ENCODE measurements at regions of chr5 and their contacts with region 1.

Region 1: GRCh38 chr5:74927336-74927735 is 61.1 kb upstream of the FAM169A start:
- DNase-seq: peak; percentile 72
- H3K4me3 ChIP-seq: no peak overlapping the region
- H3K27ac ChIP-seq: no peak overlapping the region
- H3K4me1 ChIP-seq: no peaks in the 10 kb centered on the region
- H3K27me3 ChIP-seq: no peaks in the 10 kb centered on the region
- CTCF ChIP-seq: no peak
- EP300 ChIP-seq: no peak
- POLR2A ChIP-seq: no peak

Region 2: DNA sequence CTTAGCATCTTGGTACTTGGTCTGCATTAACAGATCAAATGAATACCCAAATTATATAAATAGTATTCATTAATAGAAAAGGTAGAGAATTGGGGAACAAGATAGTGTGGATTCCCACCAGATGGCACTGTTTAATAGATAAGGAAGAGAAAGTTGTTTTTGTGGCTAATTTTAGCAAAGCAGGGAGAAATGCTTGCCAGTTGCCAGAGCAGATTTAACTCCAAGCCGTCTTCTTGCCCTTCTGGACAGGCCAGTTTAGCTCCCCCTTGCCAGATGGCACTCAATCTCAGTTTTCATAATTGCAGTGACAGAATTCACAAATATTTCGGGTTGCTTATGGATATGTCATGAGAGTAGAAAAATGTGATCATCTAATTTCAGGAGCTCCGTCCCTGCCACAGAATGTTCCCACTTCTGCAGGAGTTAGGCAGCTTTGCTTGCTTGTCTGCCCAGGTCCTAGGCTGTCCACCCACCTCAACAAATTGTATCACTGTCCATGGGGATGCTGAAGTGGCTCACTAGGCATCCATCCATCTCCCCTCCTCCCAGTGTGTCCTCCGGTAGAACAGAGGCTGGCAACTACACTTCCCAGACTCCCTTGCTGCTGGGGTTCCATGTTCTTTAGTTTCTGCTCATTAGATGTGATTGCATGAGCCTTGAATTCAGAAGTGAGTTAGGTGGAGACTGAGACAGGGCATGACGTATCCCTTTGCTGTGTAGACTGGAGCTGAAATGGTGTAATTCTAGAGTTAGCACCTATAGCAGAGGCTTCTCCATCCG is 254.1 kb before region 1 on chr5:
- intact Hi-C with region 1: no loop called
- DNase-seq: no peak
- H3K4me3 ChIP-seq: peak overlapping the region; percentile 40 to 54 (median 45)
- H3K27ac ChIP-seq: peak overlapping the region; percentile 48 to 67 (median 66)
- H3K4me1 ChIP-seq: peaks cover 14 to 18% (median 15%) of the 10 kb centered on the region in 4 donors
- H3K27me3 ChIP-seq: no peaks in the 10 kb centered on the region
- CTCF ChIP-seq: peak; percentile 47 to 59 (median 57)
- EP300 ChIP-seq: no peak
- POLR2A ChIP-seq: no peak

Region 3: GRCh38 chr5:75265731-75266130 is 338.4 kb after region 1 on chr5:
- intact Hi-C with region 1: loop called (anchors 10 kb)
- DNase-seq: no peak
- H3K4me3 ChIP-seq: no peak overlapping the region
- H3K27ac ChIP-seq: no peak overlapping the region
- H3K4me1 ChIP-seq: no peaks in the 10 kb centered on the region
- H3K27me3 ChIP-seq: no peaks in the 10 kb centered on the region
- CTCF ChIP-seq: peak; percentile 19 to 45 (median 25)
- EP300 ChIP-seq: no peak
- POLR2A ChIP-seq: no peak